Endothelial cell of umbilical vein (primary cell): ENCODE measurements at regions of chr6 and their contacts with region 1.

Region 1: DNA sequence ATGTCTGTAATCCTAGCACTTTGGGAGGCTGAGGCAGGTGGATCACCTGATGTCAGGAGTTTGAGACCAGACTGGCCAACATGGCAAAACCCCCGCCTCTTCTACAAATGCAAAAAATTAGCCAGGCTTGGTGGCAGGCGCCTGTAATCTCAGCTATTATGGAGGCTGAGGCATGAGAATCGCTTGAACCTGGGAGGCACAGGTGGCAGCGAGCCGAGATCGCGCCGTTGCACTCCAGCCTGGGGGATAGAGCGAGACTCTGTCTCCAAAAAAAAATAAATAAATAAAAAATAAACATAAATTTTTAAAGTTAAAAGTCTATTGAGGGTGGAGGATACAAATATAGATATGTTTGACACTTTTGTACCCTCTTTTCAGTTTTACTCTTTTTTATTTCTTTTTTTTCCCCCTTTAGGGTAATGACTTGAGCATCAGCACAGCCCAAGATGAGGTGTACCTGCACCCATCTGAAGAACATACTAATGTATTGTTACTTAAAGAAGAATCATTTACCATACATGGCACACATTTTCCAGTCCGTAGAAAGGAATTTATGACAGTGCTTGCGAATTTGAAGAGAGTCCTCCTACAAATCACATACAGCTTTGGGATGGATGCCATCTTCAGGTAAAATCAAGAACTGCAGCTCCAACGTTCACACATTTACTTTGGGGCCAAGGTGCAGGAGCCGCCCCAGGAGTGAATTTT is 368.9 kb downstream of the LAMA2 start:
- DNase-seq: peak; percentile 76
- H3K4me3 ChIP-seq: no peak overlapping the region
- H3K27ac ChIP-seq: no peak overlapping the region
- H3K4me1 ChIP-seq: no peaks in the 10 kb centered on the region
- H3K27me3 ChIP-seq: peaks cover 11 to 28% of the 10 kb centered on the region in 2 experiments
- CTCF ChIP-seq: peak; percentile 74 to 76
- POLR2A ChIP-seq: no peak

Region 2: DNA sequence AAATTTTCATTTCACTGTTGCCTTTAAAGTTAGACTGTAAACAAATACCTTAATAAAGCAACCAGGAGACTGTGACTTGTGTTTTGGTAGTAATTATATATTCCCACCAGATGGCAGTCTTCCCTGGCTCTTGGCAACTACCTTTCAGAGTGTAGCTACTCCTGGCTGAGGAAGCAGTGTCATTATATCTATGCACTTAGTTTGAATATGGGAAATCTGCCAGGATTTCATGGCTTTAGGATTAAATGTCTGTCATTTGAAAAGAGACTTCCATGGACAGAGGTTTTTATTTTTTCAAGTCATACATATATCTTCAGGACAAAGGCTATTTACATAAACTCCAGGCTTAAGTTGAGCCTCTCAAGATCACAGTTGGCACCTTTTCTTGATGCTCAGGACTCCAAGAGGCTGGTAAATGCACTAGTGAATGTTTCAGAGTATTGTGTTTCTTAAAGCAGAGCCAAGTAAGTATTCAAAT is 1514.8 kb before region 1 on chr6:
- CTCF ChIA-PET with region 1: interaction called, 31 read pairs
- POLR2A ChIA-PET with region 1: no interaction called
- dilution Hi-C with region 1: no loop called
- intact Hi-C with region 1: loop called (anchors 1 kb)
- DNase-seq: peak; percentile 79
- H3K4me3 ChIP-seq: no peak overlapping the region
- H3K27ac ChIP-seq: no peak overlapping the region
- H3K4me1 ChIP-seq: no peaks in the 10 kb centered on the region
- H3K27me3 ChIP-seq: peaks cover 1 to 4% of the 10 kb centered on the region in 2 experiments
- CTCF ChIP-seq: peak; percentile 31 to 46
- POLR2A ChIP-seq: no peak

Region 3: GRCh38 chr6:128725271-128726233 is 526.3 kb before region 1 on chr6:
- CTCF ChIA-PET with region 1: interaction called, 19 read pairs
- POLR2A ChIA-PET with region 1: no interaction called
- dilution Hi-C with region 1: no loop called
- intact Hi-C with region 1: loop called (anchors 1 kb)
- DNase-seq: peak; percentile 44
- H3K4me3 ChIP-seq: no peak overlapping the region
- H3K27ac ChIP-seq: no peak overlapping the region
- H3K4me1 ChIP-seq: no peaks in the 10 kb centered on the region
- H3K27me3 ChIP-seq: peaks cover 0 to 5% of the 10 kb centered on the region in 2 experiments
- CTCF ChIP-seq: peak; percentile 50 to 55
- POLR2A ChIP-seq: no peak

Region 4: GRCh38 chr6:128807577-128807976 is 444.2 kb before region 1 on chr6:
- CTCF ChIA-PET with region 1: interaction called, 89 read pairs
- POLR2A ChIA-PET with region 1: no interaction called
- dilution Hi-C with region 1: no loop called
- intact Hi-C with region 1: loop called (anchors 1 kb)
- DNase-seq: peak; percentile 62
- H3K4me3 ChIP-seq: no peak overlapping the region
- H3K27ac ChIP-seq: no peak overlapping the region
- H3K4me1 ChIP-seq: peaks cover 10% of the 10 kb centered on the region
- H3K27me3 ChIP-seq: peaks cover 7 to 11% of the 10 kb centered on the region in 2 experiments
- CTCF ChIP-seq: peak; percentile 19 to 35
- POLR2A ChIP-seq: no peak

Region 5: GRCh38 chr6:128981716-128982115 is 270.1 kb before region 1 on chr6:
- CTCF ChIA-PET with region 1: interaction called, 22 read pairs
- POLR2A ChIA-PET with region 1: no interaction called
- dilution Hi-C with region 1: no loop called
- intact Hi-C with region 1: loop called (anchors 1 kb)
- DNase-seq: no peak
- H3K4me3 ChIP-seq: no peak overlapping the region
- H3K27ac ChIP-seq: no peak overlapping the region
- H3K4me1 ChIP-seq: no peaks in the 10 kb centered on the region
- H3K27me3 ChIP-seq: no peaks in the 10 kb centered on the region
- CTCF ChIP-seq: no peak
- POLR2A ChIP-seq: no peak